AG04449 (cell line): ENCODE measurements at regions of chr3 and their contacts with region 1.

Region 1: DNA sequence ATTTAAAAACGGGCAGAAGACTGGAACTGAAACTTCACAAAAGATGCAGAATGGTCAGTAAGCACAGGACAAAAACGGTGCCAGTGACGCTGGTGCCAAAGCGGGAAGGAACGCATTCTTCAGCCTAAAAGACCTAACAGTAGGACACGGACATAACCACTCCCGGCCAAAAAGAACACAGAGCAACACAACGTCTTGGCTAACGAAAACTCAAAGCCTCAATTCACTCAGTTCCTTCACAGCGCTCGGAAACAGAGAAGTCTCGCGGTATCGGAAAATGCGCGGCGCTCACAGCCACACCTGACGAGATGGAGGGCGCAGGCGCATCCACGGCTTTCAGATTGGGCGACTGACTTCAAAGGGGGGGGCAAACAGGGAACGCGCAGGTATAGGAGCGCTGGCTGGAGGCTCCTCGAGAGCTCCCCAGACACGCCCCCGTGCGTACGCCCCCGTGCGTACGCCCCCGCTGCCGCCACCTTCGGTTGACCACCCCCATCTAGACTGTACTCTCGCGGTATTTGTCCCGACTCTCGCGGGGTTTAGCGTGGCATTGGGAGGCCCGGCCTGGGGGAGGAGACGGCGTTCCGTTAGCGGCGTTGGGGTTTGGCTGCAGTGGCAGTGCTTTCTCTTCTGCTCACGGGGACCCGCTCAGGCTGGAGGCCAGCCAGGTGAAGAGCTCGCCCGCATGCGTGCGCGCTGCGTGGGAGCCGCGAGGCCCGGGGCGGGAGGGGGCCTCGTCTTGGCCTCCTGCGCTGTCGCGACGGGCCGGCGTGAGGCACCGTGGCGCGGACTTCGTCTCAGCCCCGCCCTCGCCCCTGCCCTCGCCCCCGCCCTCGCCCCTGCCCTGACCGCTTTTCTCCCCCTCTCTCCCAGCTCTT is at the start of gene NKTR:
- DNase-seq: peak; percentile 89
- H3K4me3 ChIP-seq: peak within 1 kb of the TSS; percentile 86
- CTCF ChIP-seq: peak; percentile 17

Region 2: GRCh38 chr3:42613462-42613861 is 13.1 kb after region 1 on chr3:
- CTCF ChIA-PET with region 1: interaction called, 38 read pairs
- POLR2A ChIA-PET with region 1: no interaction called
- DNase-seq: no peak
- H3K4me3 ChIP-seq: no peak overlapping the region
- CTCF ChIP-seq: peak; percentile 24